Psoas muscle (tissue), 8 donors: ENCODE measurements at regions of chr7 and their contacts with region 1.

Region 1: GRCh38 chr7:155190688-155191087 is 107.0 kb upstream of the INSIG1 start:
- DNase-seq: peak; percentile 63 to 71
- ATAC-seq: peak; percentile 55 to 90 (median 80)
- H3K4me3 ChIP-seq: peak overlapping the region; percentile 48
- H3K27ac ChIP-seq: no peak overlapping the region
- H3K4me1 ChIP-seq: peaks cover 6% of the 10 kb centered on the region
- H3K27me3 ChIP-seq: no peaks in the 10 kb centered on the region
- CTCF ChIP-seq: peak; percentile 83

Region 2: DNA sequence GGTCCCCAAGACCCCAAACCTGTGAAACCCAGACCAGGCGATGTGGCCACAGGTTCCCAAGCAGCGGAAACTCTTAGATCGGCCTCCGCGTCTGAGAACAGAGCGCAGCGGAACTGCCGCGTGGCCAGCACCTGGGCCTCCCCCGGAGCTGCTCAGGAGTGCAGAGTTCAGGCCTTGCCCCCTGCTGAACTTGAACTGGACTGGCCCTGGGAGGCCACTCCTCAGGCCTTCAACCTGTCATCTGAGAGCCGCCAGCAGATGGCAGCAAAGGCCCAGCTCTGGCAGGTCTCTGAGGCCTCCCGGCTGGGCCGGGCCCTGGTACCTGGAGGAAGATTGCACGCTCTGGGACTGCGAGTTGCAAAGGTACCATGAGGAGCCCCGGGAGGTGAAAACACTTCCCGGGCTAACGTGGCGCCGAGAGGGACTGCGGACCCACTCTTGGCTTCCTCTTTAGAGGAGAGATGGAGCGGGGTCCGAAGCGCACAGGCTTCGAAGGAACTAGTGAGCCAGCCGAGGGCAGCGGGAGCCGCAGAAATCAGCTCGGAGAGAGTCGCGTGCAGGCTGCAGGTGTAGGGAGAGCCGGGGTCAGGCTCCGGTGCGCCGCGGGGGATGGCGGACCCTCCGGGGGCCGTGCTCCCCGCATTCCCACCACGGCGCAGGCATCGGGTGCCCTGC is 276.9 kb before region 1 on chr7:
- intact Hi-C with region 1: loop called in 1 of 2 experiments (anchors 5 kb)
- DNase-seq: peak; percentile 87 to 92
- ATAC-seq: peak; percentile 90 to 98 (median 92)
- H3K4me3 ChIP-seq: peak overlapping the region; percentile 47
- H3K27ac ChIP-seq: no peak overlapping the region
- H3K4me1 ChIP-seq: no peaks in the 10 kb centered on the region
- H3K27me3 ChIP-seq: peaks cover 0 to 29% (median 2%) of the 10 kb centered on the region in 3 donors
- CTCF ChIP-seq: peak; percentile 90

Region 3: DNA sequence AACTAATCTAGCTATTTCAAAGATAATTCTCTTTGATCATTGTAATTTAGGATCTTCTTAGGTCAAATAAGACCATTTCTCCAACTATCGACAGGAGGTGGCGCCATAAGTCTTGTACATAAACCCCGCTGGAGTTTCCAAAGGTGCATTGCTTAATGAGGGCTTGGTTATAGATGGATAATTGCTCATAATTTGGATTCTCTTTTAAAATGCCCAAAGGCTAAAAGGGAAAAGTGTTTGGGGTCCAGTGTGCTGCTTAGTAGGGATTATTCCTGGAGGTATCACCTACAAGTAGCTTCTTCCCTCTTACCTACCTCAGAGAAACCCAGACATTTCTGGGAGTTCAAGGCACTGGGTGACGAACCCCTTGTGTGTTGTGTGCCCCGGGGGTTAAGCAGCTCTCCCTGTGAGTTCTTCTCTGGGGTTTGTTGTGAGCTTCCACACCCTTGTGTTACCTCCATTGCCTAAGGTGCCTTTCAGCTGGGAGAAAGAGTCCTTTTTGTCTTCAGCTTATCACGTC is 263.0 kb before region 1 on chr7:
- intact Hi-C with region 1: loop called in 1 of 2 experiments (anchors 10 kb)
- DNase-seq: peak in 1 of 2 donors; percentile 57
- ATAC-seq: peak; percentile 82 to 92 (median 86)
- H3K4me3 ChIP-seq: peak overlapping the region; percentile 90
- H3K27ac ChIP-seq: peak overlapping the region; percentile 84
- H3K4me1 ChIP-seq: no peaks in the 10 kb centered on the region
- H3K27me3 ChIP-seq: no peaks in the 10 kb centered on the region
- CTCF ChIP-seq: peak; percentile 73

Region 4: DNA sequence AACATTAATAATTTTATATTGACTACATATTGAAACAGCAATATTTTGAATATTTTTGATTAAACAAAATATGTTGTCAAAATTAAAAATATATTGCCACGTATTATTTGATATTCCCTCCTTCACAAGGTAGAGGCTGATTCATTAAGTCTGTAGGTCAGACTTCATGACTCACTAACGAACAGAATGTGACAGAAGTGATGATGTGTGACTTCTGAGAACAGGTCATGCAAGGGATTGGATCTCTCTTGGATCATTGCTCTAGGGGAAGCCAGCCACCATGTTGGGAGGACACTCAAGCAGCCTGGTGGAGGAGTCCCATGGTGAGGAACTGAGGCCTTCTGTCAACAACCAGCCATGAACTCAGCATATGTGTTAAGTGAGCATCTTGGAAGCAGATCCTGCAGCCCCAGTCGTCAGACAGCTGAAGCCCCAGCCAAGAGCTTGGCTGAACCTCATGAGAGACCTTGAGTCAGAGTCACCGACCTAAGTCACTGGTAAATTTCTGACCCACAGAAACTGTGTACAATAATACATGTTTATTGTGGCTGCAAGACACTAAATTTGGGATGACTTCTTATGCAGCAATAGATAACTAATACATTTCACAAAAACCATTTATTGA is 54.0 kb before region 1 on chr7:
- intact Hi-C with region 1: no loop called
- DNase-seq: no peak
- ATAC-seq: no peak
- H3K4me3 ChIP-seq: no peak overlapping the region
- H3K27ac ChIP-seq: no peak overlapping the region
- H3K4me1 ChIP-seq: no peaks in the 10 kb centered on the region
- H3K27me3 ChIP-seq: peaks cover 0 to 23% (median 1%) of the 10 kb centered on the region in 3 donors
- CTCF ChIP-seq: no peak

Region 5: GRCh38 chr7:155257482-155258225 is 67.0 kb after region 1 on chr7:
- intact Hi-C with region 1: loop called in 1 of 2 experiments (anchors 5 kb)
- DNase-seq: peak; percentile 83 to 91
- ATAC-seq: peak; percentile 85 to 93 (median 88)
- H3K4me3 ChIP-seq: peak overlapping the region; percentile 47
- H3K27ac ChIP-seq: peak overlapping the region; percentile 91
- H3K4me1 ChIP-seq: peaks cover 21% of the 10 kb centered on the region
- H3K27me3 ChIP-seq: no peaks in the 10 kb centered on the region
- CTCF ChIP-seq: no peak

Region 6: GRCh38 chr7:155291045-155291530 is 100.4 kb after region 1 on chr7:
- intact Hi-C with region 1: loop called in 1 of 2 experiments (anchors 5 kb)
- DNase-seq: peak in 1 of 2 donors; percentile 59
- ATAC-seq: peak; percentile 76 to 91 (median 86)
- H3K4me3 ChIP-seq: no peak overlapping the region
- H3K27ac ChIP-seq: no peak overlapping the region
- H3K4me1 ChIP-seq: no peaks in the 10 kb centered on the region
- H3K27me3 ChIP-seq: no peaks in the 10 kb centered on the region
- CTCF ChIP-seq: no peak

Region 7: DNA sequence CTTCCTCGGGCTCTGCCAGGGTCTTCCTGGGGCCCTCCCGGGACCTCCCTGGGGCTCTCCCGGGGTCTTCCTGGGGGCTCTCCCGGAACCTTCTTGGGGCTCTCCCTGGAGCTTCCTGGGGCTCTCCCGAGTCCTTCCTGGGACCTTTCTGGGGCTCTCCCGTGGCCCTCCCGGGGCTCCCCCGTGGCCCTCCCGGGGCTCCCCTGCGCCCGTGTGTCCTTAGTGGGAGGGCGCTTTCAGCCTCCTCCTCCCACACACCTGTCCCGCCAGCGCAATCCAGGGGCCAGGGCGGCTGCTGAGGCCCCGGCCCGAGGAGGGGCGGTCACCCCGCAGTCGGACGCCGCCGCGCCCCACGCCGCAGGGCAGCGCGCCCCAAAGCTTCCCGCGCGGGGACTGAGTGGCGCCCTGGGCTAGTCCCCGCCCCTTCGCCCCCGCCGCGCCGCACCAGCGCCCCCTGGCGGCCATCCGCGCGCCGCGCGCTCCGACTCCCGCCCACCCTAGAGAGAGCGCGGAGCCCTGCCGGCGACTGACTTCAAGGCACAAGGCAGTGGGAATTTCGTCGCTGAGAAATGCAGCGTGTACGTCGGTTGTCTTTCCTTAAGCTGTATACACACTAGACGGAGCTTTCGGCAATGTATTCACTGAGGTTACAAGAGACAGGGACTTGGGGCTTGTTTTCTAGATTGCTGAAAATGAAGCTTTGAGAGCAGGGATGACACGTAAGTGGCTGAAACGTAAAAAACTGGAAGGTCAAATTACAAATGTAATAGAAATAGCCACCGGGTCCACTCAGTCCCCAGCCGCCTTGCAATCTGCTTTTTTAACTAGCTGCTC is 154.1 kb after region 1 on chr7:
- intact Hi-C with region 1: loop called (anchors 1 to 2 kb)
- DNase-seq: peak; percentile 75 to 86
- ATAC-seq: peak; percentile 95 to 99 (median 97)
- H3K4me3 ChIP-seq: peak overlapping the region; percentile 57
- H3K27ac ChIP-seq: no peak overlapping the region
- H3K4me1 ChIP-seq: peaks cover 3% of the 10 kb centered on the region
- H3K27me3 ChIP-seq: peaks cover 0 to 19% (median 6%) of the 10 kb centered on the region in 3 donors
- CTCF ChIP-seq: peak; percentile 95